A549 (cell line): ENCODE measurements at regions of chr19 and their contacts with region 1.

Region 1: DNA sequence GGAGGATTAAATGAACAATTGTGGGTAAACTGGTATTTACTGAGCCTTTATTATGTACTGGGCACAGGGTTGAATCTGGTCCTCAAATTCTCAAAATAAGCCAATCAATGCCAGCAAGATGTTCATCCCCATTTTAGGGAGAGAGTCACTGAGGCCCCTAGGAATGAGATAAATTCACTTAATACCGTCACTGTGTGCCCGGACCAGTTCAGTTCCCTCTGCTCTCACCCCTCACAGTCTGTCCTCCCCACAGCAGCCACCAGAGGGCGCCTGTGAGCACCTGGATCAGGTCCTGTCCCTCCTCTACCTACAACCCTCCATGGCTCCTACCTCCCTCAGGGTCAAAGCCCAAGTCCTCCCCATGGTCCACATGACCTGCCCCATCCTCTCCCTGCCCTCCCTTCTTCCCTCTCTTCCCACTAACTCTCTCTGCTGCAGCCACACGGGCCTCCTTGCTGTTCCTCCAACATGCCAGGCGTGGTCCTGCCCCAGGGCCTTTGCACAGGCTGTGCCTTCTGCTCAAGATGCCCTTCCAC is 42.0 kb upstream of the NFIC start:
- DNase-seq: peak in 1 of 2 experiments; percentile 57
- ATAC-seq: peak; percentile 68 to 82; a peak in 4 of 6 replicates
- H3K4me3 ChIP-seq: no peak overlapping the region
- H3K27ac ChIP-seq: no peak overlapping the region
- H3K4me1 ChIP-seq: no peaks in the 10 kb centered on the region
- CTCF ChIP-seq: peak; percentile 50
- EP300 ChIP-seq: no peak
- POLR2A ChIP-seq: no peak
- RAD21 ChIP-seq: peak in 1 of 2 experiments; percentile 38; a peak in 2 of 5 replicates

Region 2: GRCh38 chr19:3243819-3244700 is 80.3 kb before region 1 on chr19:
- CTCF ChIA-PET with region 1: no interaction called
- POLR2A ChIA-PET with region 1: no interaction called
- DNase-seq: peak in 1 of 2 experiments; percentile 49
- ATAC-seq: peak; percentile 47 to 52; a peak in 4 of 6 replicates
- H3K4me3 ChIP-seq: no peak overlapping the region
- H3K27ac ChIP-seq: no peak overlapping the region
- H3K4me1 ChIP-seq: no peaks in the 10 kb centered on the region
- CTCF ChIP-seq: no peak
- EP300 ChIP-seq: no peak
- POLR2A ChIP-seq: no peak
- RAD21 ChIP-seq: no peak

Region 3: DNA sequence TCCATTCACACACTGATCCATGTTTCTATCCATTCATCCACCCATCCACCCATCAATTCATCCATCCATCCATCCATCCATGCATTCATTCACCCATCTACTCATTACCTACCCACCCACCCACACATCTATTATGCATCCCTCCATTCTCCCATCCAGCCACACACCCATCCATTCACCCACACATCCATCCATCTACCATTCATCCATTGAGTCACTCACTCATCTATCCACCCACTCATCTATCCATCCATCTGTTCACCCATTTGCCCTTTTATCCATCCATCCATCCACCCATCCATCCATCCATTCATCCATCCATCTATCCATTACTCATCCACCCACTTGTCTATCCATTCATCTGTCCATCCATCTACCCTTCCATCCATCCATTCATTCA is 69.9 kb before region 1 on chr19:
- CTCF ChIA-PET with region 1: no interaction called
- POLR2A ChIA-PET with region 1: no interaction called
- DNase-seq: no peak
- ATAC-seq: no peak
- H3K4me3 ChIP-seq: no peak overlapping the region
- H3K27ac ChIP-seq: no peak overlapping the region
- H3K4me1 ChIP-seq: no peaks in the 10 kb centered on the region
- CTCF ChIP-seq: no peak
- EP300 ChIP-seq: no peak
- POLR2A ChIP-seq: no peak
- RAD21 ChIP-seq: no peak

Region 4: GRCh38 chr19:3270902-3271301 is 53.5 kb before region 1 on chr19:
- CTCF ChIA-PET with region 1: no interaction called
- POLR2A ChIA-PET with region 1: no interaction called
- DNase-seq: peak in 1 of 2 experiments; percentile 73
- ATAC-seq: no peak
- H3K4me3 ChIP-seq: no peak overlapping the region
- H3K27ac ChIP-seq: no peak overlapping the region
- H3K4me1 ChIP-seq: peaks cover 8% of the 10 kb centered on the region; the same call in 1 of the 3 replicates
- CTCF ChIP-seq: no peak
- EP300 ChIP-seq: no peak
- POLR2A ChIP-seq: no peak
- RAD21 ChIP-seq: no peak

Region 5: GRCh38 chr19:3434712-3435553 is 110.5 kb after region 1 on chr19:
- CTCF ChIA-PET with region 1: interaction called, 22 read pairs
- POLR2A ChIA-PET with region 1: no interaction called
- DNase-seq: peak; percentile 89 to 95
- ATAC-seq: peak; percentile 97 to 99
- H3K4me3 ChIP-seq: peak overlapping the region; percentile 30; the same call in 2 of the 3 replicates
- H3K27ac ChIP-seq: peak overlapping the region; percentile 73 to 95
- H3K4me1 ChIP-seq: peaks cover 13% of the 10 kb centered on the region
- CTCF ChIP-seq: no peak
- EP300 ChIP-seq: no peak
- POLR2A ChIP-seq: no peak
- RAD21 ChIP-seq: no peak